ENCODE measurements at regions of chr3 and their contacts with region 1.

Region 1: GRCh38 chr3:128969993-128970739 is 23.7 kb downstream of the CFAP92 start:
- DNase-seq: peak; percentile 67
- H3K4me3 ChIP-seq: no peak overlapping the region
- H3K27ac ChIP-seq: no peak overlapping the region
- H3K4me1 ChIP-seq: no peaks in the 10 kb centered on the region; a peak in 1 of 4 replicates
- H3K27me3 ChIP-seq: peaks cover 8% of the 10 kb centered on the region; the same call in 1 of the 2 replicates
- CTCF ChIP-seq: peak; percentile 97
- EP300 ChIP-seq: no peak
- RAD21 ChIP-seq: peak; percentile 95

Region 2: DNA sequence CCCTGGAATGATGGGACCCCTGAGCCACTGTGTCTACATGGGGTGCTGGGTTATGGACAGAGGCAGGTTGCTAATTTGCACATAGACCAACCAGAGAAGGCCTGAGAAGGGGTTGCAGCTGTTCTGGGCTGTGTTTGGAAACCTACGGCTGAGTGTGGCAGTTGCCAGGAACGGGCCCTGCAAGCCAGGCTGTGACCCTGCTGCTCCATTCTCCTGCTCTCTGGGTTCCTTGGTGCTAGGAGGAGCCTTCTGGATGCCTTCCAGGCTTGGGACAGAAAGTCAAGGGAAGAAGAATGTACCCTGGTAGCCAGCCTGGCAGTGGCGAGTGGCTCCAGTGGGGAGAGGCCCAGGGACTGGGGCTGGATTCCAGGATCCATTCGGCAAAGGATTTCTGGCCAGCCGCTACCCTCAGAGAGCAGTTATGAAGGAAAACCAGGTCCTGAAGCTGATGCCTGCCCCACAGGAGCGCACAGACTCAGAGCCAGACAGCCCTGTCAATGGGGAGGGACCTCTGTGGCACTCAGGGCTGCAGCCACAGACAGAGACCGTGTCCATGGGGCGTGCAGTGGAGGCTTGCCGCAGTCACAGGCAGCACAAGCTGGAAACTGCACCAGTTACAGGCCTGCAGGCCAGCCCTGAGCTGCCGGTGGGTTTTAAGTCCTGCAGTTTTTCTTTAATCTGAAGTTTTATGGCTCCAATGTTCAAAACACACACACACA is 145.9 kb before region 1 on chr3:
- CTCF ChIA-PET with region 1: no interaction called
- POLR2A ChIA-PET with region 1: no interaction called
- DNase-seq: no peak
- H3K4me3 ChIP-seq: no peak overlapping the region
- H3K27ac ChIP-seq: no peak overlapping the region
- H3K4me1 ChIP-seq: no peaks in the 10 kb centered on the region
- H3K27me3 ChIP-seq: no peaks in the 10 kb centered on the region
- CTCF ChIP-seq: no peak
- EP300 ChIP-seq: no peak
- RAD21 ChIP-seq: no peak

Region 3: DNA sequence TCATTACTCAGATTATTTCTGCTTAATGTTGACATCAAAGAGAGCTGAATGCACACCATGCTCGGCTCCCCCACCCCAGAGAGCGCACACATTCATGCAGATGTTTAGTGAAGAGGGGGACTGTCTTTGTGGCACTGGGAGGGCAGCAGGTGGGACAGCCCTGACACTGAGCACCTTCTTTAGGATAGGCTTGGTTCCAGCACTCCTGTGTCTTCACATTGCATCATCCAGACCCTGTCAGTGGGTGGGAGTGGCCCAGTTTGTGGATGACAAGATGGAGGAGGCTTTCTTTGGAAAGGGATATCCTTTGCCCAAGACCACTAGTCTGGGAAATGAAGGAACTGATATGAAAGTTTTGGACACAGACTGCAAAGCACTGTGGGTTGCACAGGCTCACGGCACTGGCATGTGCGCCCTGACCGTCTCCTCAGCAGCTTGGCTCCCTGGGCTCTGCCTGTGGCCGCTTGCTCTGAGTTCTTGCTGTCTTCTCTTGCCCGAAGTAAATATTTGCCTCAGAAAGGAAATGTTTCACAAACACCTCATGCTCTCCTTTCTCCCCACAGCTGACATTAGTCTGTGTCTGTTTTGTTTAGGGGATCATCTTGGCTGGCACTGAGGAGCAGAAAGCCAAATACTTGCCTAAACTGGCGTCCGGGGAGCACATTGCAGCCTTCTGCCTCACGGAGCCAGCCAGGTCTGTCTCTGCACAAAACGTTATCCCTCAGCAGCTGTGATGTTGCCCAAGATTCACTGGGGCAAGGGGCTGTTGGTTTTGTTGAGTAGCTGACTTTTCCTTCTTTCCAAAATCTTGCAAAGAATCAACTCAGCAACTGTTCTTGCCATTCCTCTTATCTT is 74.1 kb before region 1 on chr3:
- CTCF ChIA-PET with region 1: no interaction called
- POLR2A ChIA-PET with region 1: no interaction called
- DNase-seq: no peak
- H3K4me3 ChIP-seq: no peak overlapping the region
- H3K27ac ChIP-seq: no peak overlapping the region
- H3K4me1 ChIP-seq: no peaks in the 10 kb centered on the region
- H3K27me3 ChIP-seq: no peaks in the 10 kb centered on the region
- CTCF ChIP-seq: no peak
- EP300 ChIP-seq: no peak
- RAD21 ChIP-seq: no peak

Region 4: GRCh38 chr3:128950223-128950938 is 19.8 kb before region 1 on chr3:
- CTCF ChIA-PET with region 1: interaction called, 16 read pairs
- POLR2A ChIA-PET with region 1: no interaction called
- DNase-seq: peak; percentile 53
- H3K4me3 ChIP-seq: no peak overlapping the region
- H3K27ac ChIP-seq: no peak overlapping the region
- H3K4me1 ChIP-seq: no peaks in the 10 kb centered on the region
- H3K27me3 ChIP-seq: no peaks in the 10 kb centered on the region
- CTCF ChIP-seq: peak; percentile 27
- EP300 ChIP-seq: no peak
- RAD21 ChIP-seq: peak; percentile 60

Region 5: GRCh38 chr3:129003578-129004160 is 33.5 kb after region 1 on chr3:
- CTCF ChIA-PET with region 1: interaction called, 20 read pairs
- POLR2A ChIA-PET with region 1: no interaction called
- DNase-seq: peak; percentile 80
- H3K4me3 ChIP-seq: peak overlapping the region in 1 of 2 experiments; percentile 27; a peak in 1 of 4 replicates
- H3K27ac ChIP-seq: no peak overlapping the region
- H3K4me1 ChIP-seq: peaks cover 0 to 2% of the 10 kb centered on the region in 2 experiments; a peak in 1 of 4 replicates
- H3K27me3 ChIP-seq: peaks cover 49% of the 10 kb centered on the region
- CTCF ChIP-seq: no peak
- EP300 ChIP-seq: no peak
- RAD21 ChIP-seq: peak; percentile 28; the same call in 1 of the 2 replicates

Region 6: GRCh38 chr3:129052675-129053074 is 82.5 kb after region 1 on chr3:
- CTCF ChIA-PET with region 1: interaction called, 65 read pairs
- POLR2A ChIA-PET with region 1: no interaction called
- DNase-seq: peak; percentile 47
- H3K4me3 ChIP-seq: no peak overlapping the region
- H3K27ac ChIP-seq: peak overlapping the region in 1 of 2 experiments; percentile 78; a peak in 2 of 4 replicates
- H3K4me1 ChIP-seq: peaks cover 0 to 14% of the 10 kb centered on the region in 2 experiments; a peak in 1 of 4 replicates
- H3K27me3 ChIP-seq: 0 out of 2 replicates have a peak, but pooled peaks cover 7% of the 10 kb centered on the region
- CTCF ChIP-seq: no peak
- EP300 ChIP-seq: no peak
- RAD21 ChIP-seq: no peak

Region 7: GRCh38 chr3:129106331-129106730 is 136.2 kb after region 1 on chr3:
- CTCF ChIA-PET with region 1: interaction called, 20 read pairs
- POLR2A ChIA-PET with region 1: no interaction called
- DNase-seq: no peak
- H3K4me3 ChIP-seq: no peak overlapping the region
- H3K27ac ChIP-seq: no peak overlapping the region
- H3K4me1 ChIP-seq: no peaks in the 10 kb centered on the region
- H3K27me3 ChIP-seq: no peaks in the 10 kb centered on the region
- CTCF ChIP-seq: no peak
- EP300 ChIP-seq: no peak
- RAD21 ChIP-seq: peak; percentile 34

Region 8: GRCh38 chr3:129160891-129161859 is 191.0 kb after region 1 on chr3 and contains the start of gene ISY1:
- CTCF ChIA-PET with region 1: interaction called, 28 read pairs
- POLR2A ChIA-PET with region 1: no interaction called
- DNase-seq: peak; percentile 92
- H3K4me3 ChIP-seq: peak within 1 kb of the TSS; percentile 86 to 99
- H3K27ac ChIP-seq: peak within 1 kb of the TSS; percentile 99 to 100
- H3K4me1 ChIP-seq: peaks cover 0 to 15% of the 10 kb centered on the region in 2 experiments; a peak in 2 of 4 replicates
- H3K27me3 ChIP-seq: no peaks in the 10 kb centered on the region
- CTCF ChIP-seq: peak; percentile 81
- EP300 ChIP-seq: 0 out of 4 replicates have a peak, but pooled peaks of 1 of the 2 experiments have one; percentile 14
- RAD21 ChIP-seq: peak; percentile 44
- polyA plus RNA-seq, gene ISY1: 20.9 and 22.3 TPM in 2 replicates

Region 9: GRCh38 chr3:129249276-129250065 is 279.3 kb after region 1 on chr3 and contains the start of gene COPG1:
- CTCF ChIA-PET with region 1: interaction called, 140 read pairs
- POLR2A ChIA-PET with region 1: no interaction called
- DNase-seq: peak; percentile 95
- H3K4me3 ChIP-seq: peak within 1 kb of the TSS; percentile 86 to 95
- H3K27ac ChIP-seq: peak within 1 kb of the TSS; percentile 66 to 88
- H3K4me1 ChIP-seq: peaks cover 6 to 13% of the 10 kb centered on the region in 2 experiments; a peak in 2 of 4 replicates
- H3K27me3 ChIP-seq: no peaks in the 10 kb centered on the region
- CTCF ChIP-seq: no peak
- EP300 ChIP-seq: no peak
- RAD21 ChIP-seq: no peak
- polyA plus RNA-seq, gene COPG1: 111 and 114 TPM in 2 replicates

Region 10: DNA sequence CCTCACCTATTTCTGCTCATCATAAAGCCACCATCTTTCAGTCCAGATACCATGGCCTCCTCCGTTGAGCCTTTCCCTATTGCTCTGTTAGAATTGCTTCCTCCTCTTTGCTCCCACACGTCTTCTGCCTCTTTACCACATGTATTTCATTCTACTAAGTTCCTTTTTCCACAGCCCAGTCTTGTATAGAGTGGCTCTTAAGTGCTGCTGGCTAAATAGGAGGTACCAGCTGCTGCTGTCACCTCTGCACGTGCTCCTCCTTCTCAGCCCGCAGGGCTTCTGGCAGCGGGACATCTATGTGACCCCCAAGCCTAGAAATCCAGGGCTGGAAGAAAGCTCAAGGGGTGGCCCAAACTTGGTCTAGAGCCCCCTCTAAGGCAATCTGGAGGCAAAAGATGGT is 675.1 kb after region 1 on chr3:
- CTCF ChIA-PET with region 1: no interaction called
- POLR2A ChIA-PET with region 1: no interaction called
- DNase-seq: no peak
- H3K4me3 ChIP-seq: no peak overlapping the region
- H3K27ac ChIP-seq: no peak overlapping the region
- H3K4me1 ChIP-seq: no peaks in the 10 kb centered on the region
- H3K27me3 ChIP-seq: no peaks in the 10 kb centered on the region
- CTCF ChIP-seq: no peak
- EP300 ChIP-seq: no peak
- RAD21 ChIP-seq: no peak

Measured in SK-N-SH (cell line).